HEK293T (cell line): ENCODE measurements at regions of chr5 and their contacts with region 1.

Region 1: GRCh38 chr5:113612060-113612496 is 98.6 kb downstream of the YTHDC2 start:
- DNase-seq: peak; percentile 39

Region 2: GRCh38 chr5:113447498-113448050 is 164.5 kb before region 1 on chr5:
- CTCF ChIA-PET with region 1: no interaction called
- POLR2A ChIA-PET with region 1: no interaction called
- DNase-seq: peak; percentile 53

Region 3: GRCh38 chr5:113598926-113599325 is 13.2 kb before region 1 on chr5:
- CTCF ChIA-PET with region 1: no interaction called
- POLR2A ChIA-PET with region 1: no interaction called
- DNase-seq: no peak

Region 4: GRCh38 chr5:113652161-113652560 is 40.1 kb after region 1 on chr5:
- CTCF ChIA-PET with region 1: no interaction called
- POLR2A ChIA-PET with region 1: no interaction called
- DNase-seq: no peak

Region 5: DNA sequence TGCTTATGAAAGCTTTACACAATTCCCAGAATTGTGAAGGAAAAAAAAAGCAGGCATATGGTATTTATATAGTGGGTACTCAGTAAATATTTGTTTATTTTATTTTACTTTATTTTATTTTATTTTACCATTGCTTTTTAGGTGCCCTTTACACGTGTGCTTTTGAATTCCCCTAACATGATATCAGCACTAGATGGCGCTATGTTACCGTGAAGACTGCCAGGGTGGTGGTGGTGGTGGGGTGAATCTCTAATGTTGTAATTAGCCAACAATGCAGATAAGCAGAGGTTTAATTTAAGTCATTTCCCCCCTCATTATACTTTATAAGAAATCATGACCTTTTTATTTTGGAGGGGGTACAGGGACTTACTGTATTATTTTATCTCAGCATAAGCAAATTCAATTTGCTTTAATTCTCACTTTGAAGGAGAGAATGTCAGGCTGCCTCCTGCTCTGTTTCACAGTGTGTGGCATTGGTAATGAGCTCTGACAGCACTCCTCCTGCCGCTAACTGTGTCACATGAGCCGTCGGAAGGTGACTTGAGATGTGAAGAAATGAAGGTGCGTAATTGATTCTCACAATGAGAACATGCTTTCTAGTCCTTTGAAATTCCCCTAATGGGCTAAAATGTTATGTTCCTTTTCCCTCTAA is 67.0 kb after region 1 on chr5:
- CTCF ChIA-PET with region 1: interaction called, 13 read pairs
- POLR2A ChIA-PET with region 1: no interaction called
- DNase-seq: peak; percentile 52

Region 6: GRCh38 chr5:114449860-114450421 is 837.9 kb after region 1 on chr5:
- CTCF ChIA-PET with region 1: interaction called, 17 read pairs
- POLR2A ChIA-PET with region 1: no interaction called
- DNase-seq: peak; percentile 68